OCI-LY7 (cell line): ENCODE measurements at regions of chr14 and their contacts with region 1.

Region 1: GRCh38 chr14:75915061-75915460 is 66.7 kb downstream of the TGFB3 start:
- DNase-seq: no peak
- H3K4me3 ChIP-seq: no peak overlapping the region
- H3K27ac ChIP-seq: no peak overlapping the region
- H3K4me1 ChIP-seq: no peaks in the 10 kb centered on the region
- CTCF ChIP-seq: no peak

Region 2: GRCh38 chr14:75952489-75952888 is 37.4 kb after region 1 on chr14:
- CTCF ChIA-PET with region 1: no interaction called
- POLR2A ChIA-PET with region 1: no interaction called
- intact Hi-C with region 1: loop called (anchors 5 kb)
- DNase-seq: no peak
- H3K4me3 ChIP-seq: no peak overlapping the region
- H3K27ac ChIP-seq: no peak overlapping the region
- H3K4me1 ChIP-seq: no peaks in the 10 kb centered on the region
- CTCF ChIP-seq: no peak